ENCODE measurements at regions of chr7 and their contacts with region 1.

Region 1: GRCh38 chr7:82017334-82017943 is 247.6 kb upstream of the HGF start:
- DNase-seq: peak in 1 of 2 donors; percentile 58
- H3K4me3 ChIP-seq: no peak overlapping the region
- H3K27ac ChIP-seq: no peak overlapping the region
- H3K4me1 ChIP-seq: no peaks in the 10 kb centered on the region
- H3K27me3 ChIP-seq: no peaks in the 10 kb centered on the region
- CTCF ChIP-seq: peak in 3 of 7 experiments; percentile 12 to 31 (median 23)
- EP300 ChIP-seq: no peak
- POLR2A ChIP-seq: no peak

Region 2: DNA sequence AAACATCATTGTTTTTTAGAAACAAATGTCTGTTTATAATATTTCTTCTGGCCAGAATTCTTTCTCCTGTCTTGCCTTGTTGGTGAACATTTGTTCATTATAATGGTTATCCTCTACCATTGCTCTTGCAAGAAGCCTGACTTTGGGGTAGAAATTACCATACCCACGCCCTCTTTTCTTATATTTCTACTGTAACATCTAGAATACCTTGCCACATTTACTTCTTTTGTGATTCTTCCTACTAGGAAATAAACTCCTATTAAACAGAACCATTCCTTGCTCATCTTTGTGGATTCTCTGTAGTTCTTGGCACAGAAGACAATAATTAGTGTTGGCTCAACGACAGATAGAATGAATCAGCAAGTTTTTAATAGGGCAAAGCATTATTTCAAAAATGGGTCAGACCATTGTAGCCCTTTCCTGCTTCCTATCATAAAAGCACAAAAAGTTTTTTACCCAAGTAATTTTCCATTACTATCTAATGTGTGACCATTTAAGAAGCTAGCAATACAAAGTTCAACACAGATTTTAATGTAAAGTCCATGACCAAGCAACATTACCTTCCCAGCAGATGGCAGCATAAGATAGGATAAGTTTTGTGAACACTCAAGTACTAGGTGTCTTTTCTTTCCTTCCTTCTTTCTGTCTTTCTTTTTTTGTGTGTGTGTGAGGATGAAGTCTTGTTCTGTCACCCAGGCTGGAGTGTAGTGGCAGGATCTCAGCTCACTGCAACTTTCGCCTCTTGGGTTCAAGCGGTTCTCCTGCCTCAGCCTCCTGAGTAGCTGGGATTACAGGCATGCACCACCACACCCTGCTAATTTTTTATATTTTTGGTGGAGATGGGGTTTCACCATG is 518.0 kb before region 1 on chr7:
- intact Hi-C with region 1: loop called (anchors 5 kb)
- DNase-seq: peak in 1 of 2 donors; percentile 88
- H3K4me3 ChIP-seq: no peak overlapping the region
- H3K27ac ChIP-seq: peak overlapping the region in 2 of 5 donors; percentile 19 to 22
- H3K4me1 ChIP-seq: peaks cover 4 to 15% (median 9%) of the 10 kb centered on the region in 4 donors
- H3K27me3 ChIP-seq: no peaks in the 10 kb centered on the region
- CTCF ChIP-seq: peak in 4 of 7 experiments; percentile 34 to 67 (median 61)
- EP300 ChIP-seq: no peak
- POLR2A ChIP-seq: no peak

Region 3: GRCh38 chr7:82183634-82184033 is 166.2 kb after region 1 on chr7:
- intact Hi-C with region 1: no loop called
- DNase-seq: no peak
- H3K4me3 ChIP-seq: no peak overlapping the region
- H3K27ac ChIP-seq: no peak overlapping the region
- H3K4me1 ChIP-seq: no peaks in the 10 kb centered on the region
- H3K27me3 ChIP-seq: no peaks in the 10 kb centered on the region
- CTCF ChIP-seq: no peak
- EP300 ChIP-seq: no peak
- POLR2A ChIP-seq: no peak